ENCODE measurements at regions of chr18 and their contacts with region 1.

Region 1: GRCh38 chr18:48022531-48023329 is 92.3 kb upstream of the SMAD2 start:
- DNase-seq: peak; percentile 83
- H3K4me3 Mint-ChIP-seq: no peak overlapping the region
- H3K27ac Mint-ChIP-seq: no peak overlapping the region
- H3K4me1 Mint-ChIP-seq: peaks cover 26% of the 10 kb centered on the region
- H3K27me3 Mint-ChIP-seq: no peaks in the 10 kb centered on the region
- CTCF ChIP-seq: peak; percentile 66

Region 2: GRCh38 chr18:47756364-47757016 is 266.2 kb before region 1 on chr18:
- CTCF ChIA-PET with region 1: no interaction called
- POLR2A ChIA-PET with region 1: no interaction called
- intact Hi-C with region 1: loop called (anchors 5 kb)
- DNase-seq: peak; percentile 56
- H3K4me3 Mint-ChIP-seq: no peak overlapping the region
- H3K27ac Mint-ChIP-seq: no peak overlapping the region
- H3K4me1 Mint-ChIP-seq: no peaks in the 10 kb centered on the region
- H3K27me3 Mint-ChIP-seq: no peaks in the 10 kb centered on the region
- CTCF ChIP-seq: peak; percentile 89

Region 3: DNA sequence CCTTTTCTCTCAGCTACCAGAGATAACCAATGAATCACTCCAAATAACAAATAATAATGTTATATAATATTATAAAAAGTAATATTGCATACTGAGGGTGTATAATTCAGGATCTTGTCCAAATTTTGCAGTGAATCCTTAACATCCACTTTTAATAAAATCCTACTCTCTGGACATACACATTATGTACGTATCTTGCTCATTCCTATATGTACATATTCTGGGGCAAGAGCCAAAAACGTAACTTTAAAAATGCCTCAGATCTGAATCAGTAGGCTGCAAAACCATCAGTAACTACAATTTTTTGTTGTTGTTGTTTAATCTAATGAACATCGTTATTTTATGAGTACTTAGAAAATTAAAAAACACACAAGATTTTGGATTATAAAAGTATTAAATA is 157.5 kb before region 1 on chr18:
- CTCF ChIA-PET with region 1: interaction called, 4 read pairs
- POLR2A ChIA-PET with region 1: no interaction called
- intact Hi-C with region 1: loop called (anchors 1 kb)
- DNase-seq: no peak
- H3K4me3 Mint-ChIP-seq: no peak overlapping the region
- H3K27ac Mint-ChIP-seq: no peak overlapping the region
- H3K4me1 Mint-ChIP-seq: no peaks in the 10 kb centered on the region
- H3K27me3 Mint-ChIP-seq: no peaks in the 10 kb centered on the region
- CTCF ChIP-seq: no peak

Region 4: DNA sequence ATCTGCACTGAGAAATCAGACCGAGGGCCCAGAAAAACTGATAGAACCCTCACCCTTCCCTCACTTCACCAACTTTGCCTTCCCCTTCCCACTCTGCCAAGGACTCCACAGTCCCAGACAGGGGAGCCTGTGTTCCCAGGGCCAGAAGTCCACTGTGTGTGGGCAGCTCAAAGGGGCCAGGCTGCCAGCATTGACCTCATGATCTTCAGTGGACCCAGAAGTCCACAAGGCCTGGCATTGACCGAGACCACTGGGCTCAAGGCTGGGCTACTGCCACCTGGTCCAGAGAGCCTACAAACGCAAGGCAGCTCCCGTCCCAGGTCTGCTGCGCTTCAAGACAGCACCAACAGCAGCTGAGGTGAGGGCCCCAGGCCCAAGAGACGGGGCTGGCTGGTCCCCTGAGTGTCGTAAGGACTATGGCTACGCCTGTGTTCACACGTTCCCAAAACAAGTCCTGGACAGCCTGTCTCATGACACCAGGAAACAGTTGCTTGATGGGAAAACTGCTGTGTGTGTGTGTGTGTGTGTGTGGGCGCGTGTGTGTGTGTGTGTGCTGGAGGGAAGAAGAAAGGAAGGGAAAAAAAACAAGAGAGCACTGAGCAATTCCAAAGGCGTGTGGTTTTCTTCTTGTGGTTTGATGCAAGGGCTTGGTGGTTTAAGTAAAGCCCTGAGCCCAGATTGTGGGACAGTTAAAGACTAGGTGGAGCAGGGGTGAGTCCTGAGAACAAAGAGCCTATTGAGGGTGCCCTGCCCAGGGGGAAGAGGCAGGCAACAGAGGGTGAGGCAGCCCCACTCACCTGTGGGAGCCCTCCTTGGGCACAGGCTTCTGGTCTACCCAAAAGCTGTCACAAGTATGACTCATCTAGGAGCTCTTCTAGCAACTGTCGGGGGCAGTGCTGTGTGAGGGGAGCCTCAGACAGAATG is 433.1 kb after region 1 on chr18:
- CTCF ChIA-PET with region 1: interaction called, 10 read pairs
- POLR2A ChIA-PET with region 1: no interaction called
- intact Hi-C with region 1: no loop called
- DNase-seq: peak; percentile 49
- H3K4me3 Mint-ChIP-seq: no peak overlapping the region
- H3K27ac Mint-ChIP-seq: peak overlapping the region; percentile 50
- H3K4me1 Mint-ChIP-seq: peaks cover 23% of the 10 kb centered on the region
- H3K27me3 Mint-ChIP-seq: no peaks in the 10 kb centered on the region
- CTCF ChIP-seq: no peak

Measured in MCF 10A (cell line).